ENCODE measurements at regions of chr10 and their contacts with region 1.

Region 1: DNA sequence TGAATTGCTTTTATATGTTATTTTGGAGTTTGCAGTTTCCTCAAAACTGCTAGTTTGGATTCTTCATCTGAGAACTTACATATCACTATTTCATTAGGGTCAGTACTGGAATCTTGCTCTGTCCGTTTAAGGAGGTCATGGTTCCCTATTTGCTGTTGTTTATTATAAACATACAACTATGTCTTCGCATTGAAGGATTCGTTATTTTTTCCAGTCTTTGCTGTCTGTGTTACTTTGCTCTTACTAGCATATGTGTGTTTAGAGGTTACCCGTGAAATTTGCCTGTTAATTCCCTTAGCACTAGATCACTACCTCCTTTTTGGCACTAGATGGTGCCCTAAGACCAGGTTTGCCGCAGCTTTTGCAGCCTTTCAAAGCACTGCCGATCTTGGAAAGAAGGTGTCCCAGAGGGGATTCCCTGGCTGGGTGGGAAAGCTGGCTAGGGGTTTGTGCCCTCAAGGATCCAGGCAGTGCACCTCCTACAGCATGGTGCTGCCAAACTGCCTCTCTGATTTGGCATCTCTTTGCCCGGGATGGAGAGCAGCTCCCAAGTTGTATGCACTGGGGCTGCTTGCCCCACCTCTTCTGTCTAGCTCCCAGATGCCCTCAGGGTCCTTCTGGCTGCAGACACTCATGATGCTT is 103.1 kb upstream of the APBB1IP start:
- DNase-seq: peak; percentile 45
- ATAC-seq: peak; percentile 92
- H3K4me3 Mint-ChIP-seq: peak overlapping the region; percentile 82
- H3K27ac Mint-ChIP-seq: no peak overlapping the region
- H3K4me1 Mint-ChIP-seq: peaks cover 9% of the 10 kb centered on the region
- H3K27me3 Mint-ChIP-seq: no peaks in the 10 kb centered on the region
- CTCF ChIP-seq: peak; percentile 89

Region 2: DNA sequence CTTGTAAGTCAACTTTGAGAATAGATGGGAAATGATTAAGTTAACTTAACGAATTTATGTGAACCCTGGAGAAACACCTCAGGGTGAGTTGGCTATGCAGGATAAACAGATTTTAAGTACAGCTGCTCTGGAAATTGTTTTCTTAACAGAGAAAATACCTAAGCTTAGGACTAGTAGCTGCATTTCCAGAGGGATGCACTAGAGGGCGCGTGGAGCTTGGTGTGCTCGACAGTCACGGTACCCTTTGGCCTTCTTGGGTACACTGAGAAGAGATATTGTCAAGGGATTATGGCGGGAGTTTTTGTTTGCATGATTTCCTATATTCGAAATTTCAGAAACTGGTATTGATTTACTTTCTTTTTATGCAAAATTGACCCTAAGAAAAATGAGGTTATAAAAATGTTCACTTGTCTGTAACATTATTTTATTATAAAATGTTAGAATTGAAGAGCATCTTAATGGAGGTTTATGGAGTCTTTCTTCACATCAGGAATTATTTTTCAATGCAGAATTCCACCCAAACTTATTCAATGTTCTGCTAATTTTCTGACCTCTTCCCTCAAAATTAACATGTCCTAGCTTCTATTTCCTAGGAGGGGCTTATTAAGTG is 459.4 kb before region 1 on chr10:
- CTCF ChIA-PET with region 1: interaction called, 5 read pairs
- POLR2A ChIA-PET with region 1: no interaction called
- intact Hi-C with region 1: loop called (anchors 2 kb)
- DNase-seq: peak; percentile 34
- ATAC-seq: peak; percentile 76
- H3K4me3 Mint-ChIP-seq: no peak overlapping the region
- H3K27ac Mint-ChIP-seq: no peak overlapping the region
- H3K4me1 Mint-ChIP-seq: no peaks in the 10 kb centered on the region
- H3K27me3 Mint-ChIP-seq: no peaks in the 10 kb centered on the region
- CTCF ChIP-seq: peak; percentile 91

Region 3: DNA sequence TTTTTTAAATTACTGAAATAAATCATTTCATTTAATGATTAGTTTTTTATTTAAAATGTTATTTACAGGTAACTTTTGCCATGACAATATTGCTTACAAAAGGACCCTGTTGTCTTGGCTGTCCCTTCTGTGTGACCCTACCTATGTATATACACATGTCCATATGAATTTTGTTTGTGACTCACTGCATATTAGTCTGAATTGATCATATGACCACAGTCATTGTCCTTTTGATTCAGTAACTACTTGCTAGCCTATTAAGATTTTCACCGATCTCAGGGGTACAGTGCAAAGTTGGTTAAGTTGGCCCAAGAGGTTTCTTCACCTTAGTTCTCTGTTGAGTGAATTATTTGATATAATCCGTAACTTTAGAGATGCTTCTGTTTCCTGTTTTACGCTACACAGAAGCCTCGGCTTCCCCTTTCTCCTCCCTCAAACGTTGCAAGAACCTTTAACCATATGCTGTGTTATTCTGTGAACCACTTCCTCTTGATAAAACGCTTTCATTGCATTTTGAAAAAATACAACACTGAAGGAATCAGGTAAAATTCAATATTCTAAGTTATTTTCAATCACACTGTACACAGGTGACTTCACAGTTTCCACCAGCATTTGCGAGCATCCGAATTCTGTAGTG is 147.0 kb after region 1 on chr10:
- CTCF ChIA-PET with region 1: interaction called, 5 read pairs
- POLR2A ChIA-PET with region 1: no interaction called
- intact Hi-C with region 1: loop called (anchors 1 kb)
- DNase-seq: no peak
- ATAC-seq: peak; percentile 79
- H3K4me3 Mint-ChIP-seq: peak overlapping the region; percentile 46
- H3K27ac Mint-ChIP-seq: peak overlapping the region; percentile 83
- H3K4me1 Mint-ChIP-seq: peaks cover 82% of the 10 kb centered on the region
- H3K27me3 Mint-ChIP-seq: no peaks in the 10 kb centered on the region
- CTCF ChIP-seq: no peak

Region 4: DNA sequence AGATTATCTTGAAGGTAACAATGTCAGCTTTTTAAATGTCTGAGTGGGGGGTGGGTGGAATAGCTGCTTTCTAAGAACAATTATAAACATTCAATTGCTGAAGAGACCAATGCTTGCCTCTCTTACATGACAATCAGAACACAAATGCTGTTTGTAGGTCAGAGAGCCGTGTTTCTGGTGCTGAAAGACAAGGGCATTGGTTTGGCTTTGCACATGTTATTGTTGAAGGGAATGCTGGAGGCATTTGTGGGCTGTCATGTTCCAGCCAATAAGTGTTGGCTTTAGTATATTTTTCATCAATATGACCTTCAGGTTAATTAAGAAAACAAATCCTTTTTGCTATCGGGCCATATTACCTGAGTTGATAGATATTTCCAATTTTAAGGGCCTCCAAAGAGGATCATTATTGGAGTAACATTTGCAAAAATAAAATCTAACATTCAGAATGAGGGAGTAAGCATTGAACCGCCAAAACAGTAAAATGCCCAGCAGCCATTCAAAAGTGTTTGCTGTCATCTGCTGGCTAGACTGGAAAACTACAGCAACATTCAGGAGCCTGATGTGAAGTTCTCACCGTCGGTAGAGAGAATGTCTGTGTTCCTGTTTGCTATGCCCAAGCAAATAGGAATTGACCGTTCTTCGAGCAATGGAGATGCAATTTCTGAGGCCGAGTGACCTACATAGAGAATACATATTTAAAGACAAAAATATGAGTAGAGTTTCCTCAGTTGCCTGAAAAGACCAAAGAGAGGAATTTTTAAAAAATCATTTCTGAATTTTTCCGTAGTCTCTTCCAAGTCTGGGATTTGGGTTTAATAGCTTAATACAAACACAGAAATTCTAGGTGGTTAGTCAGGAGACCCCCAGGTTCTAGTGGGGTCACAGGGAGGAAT is 221.9 kb after region 1 on chr10:
- CTCF ChIA-PET with region 1: interaction called, 67 read pairs
- POLR2A ChIA-PET with region 1: interaction called, 4 read pairs
- intact Hi-C with region 1: loop called (anchors 1 kb)
- DNase-seq: no peak
- ATAC-seq: peak; percentile 64
- H3K4me3 Mint-ChIP-seq: no peak overlapping the region
- H3K27ac Mint-ChIP-seq: peak overlapping the region; percentile 42
- H3K4me1 Mint-ChIP-seq: no peaks in the 10 kb centered on the region
- H3K27me3 Mint-ChIP-seq: no peaks in the 10 kb centered on the region
- CTCF ChIP-seq: peak; percentile 29

Region 5: GRCh38 chr10:26725837-26726727 is 391.0 kb after region 1 on chr10:
- CTCF ChIA-PET with region 1: interaction called, 25 read pairs
- POLR2A ChIA-PET with region 1: interaction called, 4 read pairs
- intact Hi-C with region 1: loop called (anchors 1 kb)
- DNase-seq: no peak
- ATAC-seq: peak; percentile 80
- H3K4me3 Mint-ChIP-seq: no peak overlapping the region
- H3K27ac Mint-ChIP-seq: peak overlapping the region; percentile 4
- H3K4me1 Mint-ChIP-seq: peaks cover 17% of the 10 kb centered on the region
- H3K27me3 Mint-ChIP-seq: no peaks in the 10 kb centered on the region
- CTCF ChIP-seq: peak; percentile 45

Region 6: DNA sequence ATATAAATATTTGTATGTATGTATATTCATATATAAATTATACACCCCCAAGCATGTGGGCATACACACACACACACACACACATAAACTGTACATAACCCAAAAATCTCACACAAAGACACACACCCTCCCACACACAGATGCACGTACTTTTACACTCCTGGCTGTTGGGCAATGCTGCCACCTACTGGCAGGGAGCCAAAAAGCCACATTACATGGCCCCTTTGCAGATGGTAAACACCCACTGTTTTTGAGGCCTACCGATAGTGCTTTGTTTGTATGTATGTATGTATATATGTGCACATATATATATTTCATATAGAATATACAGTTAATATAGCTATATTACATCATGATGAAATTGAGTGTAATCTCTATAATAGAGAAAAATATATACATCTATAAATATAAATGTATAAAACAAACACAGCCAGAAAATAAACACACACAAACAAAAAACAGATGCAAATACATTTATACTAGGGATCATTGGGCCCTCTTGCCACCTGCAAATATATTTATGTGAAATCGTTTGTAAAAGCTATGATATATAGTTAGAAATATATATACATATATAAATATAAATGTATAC is 1025.6 kb after region 1 on chr10:
- CTCF ChIA-PET with region 1: no interaction called
- POLR2A ChIA-PET with region 1: no interaction called
- intact Hi-C with region 1: loop called (anchors 5 kb)
- DNase-seq: peak; percentile 75
- ATAC-seq: peak; percentile 97
- H3K4me3 Mint-ChIP-seq: no peak overlapping the region
- H3K27ac Mint-ChIP-seq: no peak overlapping the region
- H3K4me1 Mint-ChIP-seq: peaks cover 8% of the 10 kb centered on the region
- H3K27me3 Mint-ChIP-seq: no peaks in the 10 kb centered on the region
- CTCF ChIP-seq: peak; percentile 99